ENCODE measurements at regions of chr1 and their contacts with region 1.

Region 1: GRCh38 chr1:54950369-54951163 is 29.9 kb upstream of the TMEM61 start:
- DNase-seq: peak; percentile 36
- ATAC-seq: no peak
- H3K4me3 ChIP-seq: no peak overlapping the region
- H3K4me3 Mint-ChIP-seq: no peak overlapping the region
- H3K27ac ChIP-seq: no peak overlapping the region
- H3K27ac Mint-ChIP-seq: no peak overlapping the region
- H3K4me1 ChIP-seq: peaks cover 0 to 3% of the 10 kb centered on the region in 2 donors
- H3K4me1 Mint-ChIP-seq: no peaks in the 10 kb centered on the region
- H3K27me3 ChIP-seq: peaks cover 0 to 3% (median 0%) of the 10 kb centered on the region in 4 experiments
- H3K27me3 Mint-ChIP-seq: peaks cover 28% of the 10 kb centered on the region
- CTCF ChIP-seq: peak; percentile 57

Region 2: DNA sequence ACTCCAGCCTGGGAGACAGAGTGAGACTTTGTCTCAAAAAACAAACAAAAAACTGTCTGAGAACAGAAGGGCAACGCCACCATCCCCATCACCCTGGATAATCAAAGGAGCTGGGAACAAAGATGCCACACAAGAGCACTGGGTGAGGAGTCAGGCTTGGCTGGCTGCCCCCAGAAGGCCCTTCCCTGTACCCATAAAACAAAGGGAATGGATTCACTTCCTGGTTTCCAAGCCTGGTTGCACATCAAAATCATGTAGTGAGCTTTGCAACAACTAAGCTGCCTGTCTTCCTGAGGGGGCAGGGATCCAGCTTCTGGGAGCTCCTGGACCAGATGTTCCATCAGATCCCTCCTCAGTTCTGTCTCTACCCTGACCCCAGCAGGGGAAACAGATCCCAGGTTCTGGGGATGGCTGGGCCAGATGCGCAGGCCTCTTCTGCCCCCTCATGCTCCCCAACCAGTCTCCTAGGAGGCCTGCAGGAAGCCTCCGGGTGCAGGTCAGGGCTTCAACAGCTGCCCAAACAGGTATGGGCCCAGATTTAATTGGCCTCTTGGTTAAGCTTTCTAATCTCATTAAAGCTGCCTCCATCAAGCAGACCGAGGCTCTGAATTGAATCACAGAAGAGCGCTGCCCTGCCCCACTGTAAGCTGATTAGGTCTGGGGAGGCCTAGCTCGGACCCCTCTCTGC is 652.8 kb before region 1 on chr1:
- CTCF ChIA-PET with region 1: no interaction called
- POLR2A ChIA-PET with region 1: no interaction called
- intact Hi-C with region 1: no loop called
- DNase-seq: no peak
- ATAC-seq: no peak
- H3K4me3 ChIP-seq: no peak overlapping the region
- H3K4me3 Mint-ChIP-seq: no peak overlapping the region
- H3K27ac ChIP-seq: no peak overlapping the region
- H3K27ac Mint-ChIP-seq: no peak overlapping the region
- H3K4me1 ChIP-seq: peaks cover 7 to 15% of the 10 kb centered on the region in 2 donors
- H3K4me1 Mint-ChIP-seq: peaks cover 22% of the 10 kb centered on the region
- H3K27me3 ChIP-seq: no peaks in the 10 kb centered on the region
- H3K27me3 Mint-ChIP-seq: no peaks in the 10 kb centered on the region
- CTCF ChIP-seq: no peak

Region 3: GRCh38 chr1:54996359-54996868 is 45.8 kb after region 1 on chr1:
- CTCF ChIA-PET with region 1: interaction called, 17 read pairs
- POLR2A ChIA-PET with region 1: no interaction called
- intact Hi-C with region 1: loop called (anchors 1 kb)
- DNase-seq: peak; percentile 67
- ATAC-seq: peak; percentile 49
- H3K4me3 ChIP-seq: no peak overlapping the region
- H3K4me3 Mint-ChIP-seq: peak overlapping the region; percentile 40
- H3K27ac ChIP-seq: no peak overlapping the region
- H3K27ac Mint-ChIP-seq: no peak overlapping the region
- H3K4me1 ChIP-seq: peaks cover 10 to 11% of the 10 kb centered on the region in 2 donors
- H3K4me1 Mint-ChIP-seq: peaks cover 14% of the 10 kb centered on the region
- H3K27me3 ChIP-seq: peaks cover 0 to 52% (median 13%) of the 10 kb centered on the region in 4 experiments
- H3K27me3 Mint-ChIP-seq: peaks cover 48% of the 10 kb centered on the region
- CTCF ChIP-seq: peak; percentile 71

Region 4: DNA sequence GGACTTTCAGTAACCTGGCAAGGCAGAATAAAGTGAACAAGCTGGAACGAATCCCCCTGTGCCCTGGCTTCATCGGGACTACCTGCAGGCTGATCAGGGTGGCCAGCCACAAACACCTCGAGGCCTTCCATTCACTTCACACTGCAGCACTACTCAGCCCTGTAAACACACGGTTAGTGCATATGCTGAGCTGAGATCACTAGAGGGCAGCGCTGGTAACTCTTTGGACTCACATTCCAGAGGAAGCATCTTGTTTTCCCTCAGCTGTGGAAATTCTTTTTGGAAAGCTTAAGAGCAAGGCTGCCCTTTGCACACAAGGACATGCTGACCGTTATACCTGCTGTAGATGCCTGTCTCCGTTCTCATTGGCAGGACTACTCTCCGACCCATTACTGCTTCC is 120.9 kb after region 1 on chr1:
- CTCF ChIA-PET with region 1: no interaction called
- POLR2A ChIA-PET with region 1: no interaction called
- intact Hi-C with region 1: no loop called
- DNase-seq: no peak
- ATAC-seq: no peak
- H3K4me3 ChIP-seq: no peak overlapping the region
- H3K4me3 Mint-ChIP-seq: no peak overlapping the region
- H3K27ac ChIP-seq: no peak overlapping the region
- H3K27ac Mint-ChIP-seq: no peak overlapping the region
- H3K4me1 ChIP-seq: no peaks in the 10 kb centered on the region
- H3K4me1 Mint-ChIP-seq: no peaks in the 10 kb centered on the region
- H3K27me3 ChIP-seq: no peaks in the 10 kb centered on the region
- H3K27me3 Mint-ChIP-seq: no peaks in the 10 kb centered on the region
- CTCF ChIP-seq: no peak

Measured in B cell (primary cell).